ENCODE measurements at regions of chr9 and their contacts with region 1.

Region 1: GRCh38 chr9:21334701-21335632 is at the start of gene KLHL9:
- DNase-seq: peak; percentile 88
- CTCF ChIP-seq: no peak

Region 2: DNA sequence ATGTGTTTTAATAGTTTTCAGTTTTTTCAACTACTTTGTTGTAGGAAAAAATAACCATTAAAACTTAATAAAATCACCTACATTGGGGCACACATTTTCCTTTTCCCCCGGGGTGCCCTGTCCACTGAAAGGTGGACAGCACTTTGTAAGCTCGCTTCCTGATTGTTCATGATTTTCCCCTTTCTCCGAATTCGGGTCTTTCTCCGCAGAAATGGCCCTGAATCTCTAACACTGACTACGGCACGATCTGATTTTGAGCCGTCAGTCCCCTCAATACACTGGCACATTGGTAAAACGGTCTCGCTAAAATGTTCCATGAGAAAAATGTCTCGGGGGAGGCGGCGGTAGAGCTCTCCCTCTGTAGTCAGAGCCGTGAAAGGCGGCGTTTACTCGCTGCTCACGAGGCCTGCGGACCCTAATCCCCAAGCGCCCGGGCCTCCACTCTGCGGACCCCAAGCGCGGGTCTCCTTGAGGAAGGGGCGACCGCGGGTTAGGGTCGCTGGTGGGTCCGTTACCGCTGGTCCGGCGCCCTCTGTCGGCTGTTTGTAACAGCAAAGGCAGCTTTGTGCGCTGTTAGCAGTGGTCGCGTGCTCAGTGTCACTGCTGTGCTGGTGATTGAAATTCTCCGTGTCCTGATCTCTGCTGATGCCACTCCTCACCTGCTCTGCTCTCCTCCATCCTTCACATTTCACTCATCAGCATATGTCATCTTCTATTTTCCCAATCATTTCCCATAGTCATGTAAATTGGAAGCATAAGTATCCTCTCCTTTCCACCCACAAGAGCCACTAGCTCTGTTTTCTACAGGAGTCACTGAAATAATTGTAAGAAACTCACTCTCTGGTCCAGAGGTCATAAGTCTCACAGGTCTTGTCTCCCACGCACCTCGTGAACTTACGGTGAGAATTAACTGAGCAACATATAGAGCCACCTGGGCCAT is 61.1 kb after region 1 on chr9:
- in situ Hi-C with region 1: loop called (anchors 10 kb)
- DNase-seq: peak; percentile 41
- CTCF ChIP-seq: peak; percentile 92

Region 3: DNA sequence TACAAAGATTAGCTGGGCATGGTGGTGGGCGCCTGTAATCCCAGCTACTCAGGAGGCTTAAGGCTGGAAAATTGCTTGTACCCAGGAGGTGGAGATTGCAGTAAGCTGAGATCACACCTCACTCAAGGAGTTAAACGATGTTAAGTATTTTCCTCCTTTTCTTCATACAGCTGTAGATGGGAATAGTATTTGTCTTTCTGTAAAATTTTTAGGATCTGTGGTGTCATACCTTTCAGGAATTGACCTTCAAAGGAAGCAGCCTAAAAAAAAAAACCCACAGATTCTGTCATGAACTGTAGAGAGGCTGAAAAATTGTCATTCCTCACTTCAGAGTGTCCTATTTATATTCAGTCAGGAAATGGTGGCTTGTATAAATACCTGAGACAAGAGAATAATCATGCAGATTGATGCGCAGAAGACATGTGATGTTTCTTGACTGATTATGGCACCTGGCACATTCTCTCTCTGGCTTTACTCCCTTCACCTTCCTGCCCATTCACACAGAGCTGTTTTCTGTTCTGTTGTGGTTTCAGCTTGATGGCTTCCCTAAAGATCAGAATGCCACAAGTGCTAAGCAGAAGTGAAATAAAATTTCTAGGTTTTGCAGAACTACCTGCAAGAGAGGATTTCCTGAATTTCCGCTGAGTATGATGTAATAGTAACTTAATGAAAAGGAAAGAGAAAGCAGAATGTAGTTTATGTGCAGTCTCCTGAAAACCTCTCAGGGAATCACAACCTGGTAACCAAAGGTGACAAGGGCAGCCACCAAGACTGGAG is 109.1 kb after region 1 on chr9:
- in situ Hi-C with region 1: loop called (anchors 10 kb)
- DNase-seq: peak; percentile 16
- CTCF ChIP-seq: no peak

Measured in GM13977 (cell line).